CD8-positive, alpha-beta T cell (primary cell): ENCODE measurements at regions of chr6 and their contacts with region 1.

Region 1: GRCh38 chr6:32589598-32590449 is at the start of gene HLA-DRB1:
- DNase-seq: peak in 6 of 9 experiments; percentile 1 to 69 (median 25)
- ATAC-seq: peak; percentile 94
- H3K4me3 ChIP-seq: peak within 1 kb of the TSS; percentile 27 to 36
- H3K4me3 Mint-ChIP-seq: peak within 1 kb of the TSS; percentile 81
- H3K27ac ChIP-seq: peak within 1 kb of the TSS in 1 of 2 experiments; percentile 20
- H3K27ac Mint-ChIP-seq: peak within 1 kb of the TSS; percentile 80
- H3K4me1 ChIP-seq: no peaks in the 10 kb centered on the region
- H3K4me1 Mint-ChIP-seq: peaks cover 18% of the 10 kb centered on the region
- H3K27me3 ChIP-seq: no peaks in the 10 kb centered on the region
- H3K27me3 Mint-ChIP-seq: no peaks in the 10 kb centered on the region
- CTCF ChIP-seq: no peak
- total RNA-seq, gene HLA-DRB1: 32.6 to 33.4 TPM

Region 2: GRCh38 chr6:32522302-32523047 is 67.3 kb before region 1 on chr6:
- CTCF ChIA-PET with region 1: no interaction called
- POLR2A ChIA-PET with region 1: no interaction called
- intact Hi-C with region 1: loop called (anchors 1 to 2 kb)
- DNase-seq: no peak
- ATAC-seq: no peak
- H3K4me3 ChIP-seq: no peak overlapping the region
- H3K4me3 Mint-ChIP-seq: no peak overlapping the region
- H3K27ac ChIP-seq: no peak overlapping the region
- H3K27ac Mint-ChIP-seq: no peak overlapping the region
- H3K4me1 ChIP-seq: no peaks in the 10 kb centered on the region
- H3K4me1 Mint-ChIP-seq: peaks cover 7% of the 10 kb centered on the region
- H3K27me3 ChIP-seq: no peaks in the 10 kb centered on the region
- H3K27me3 Mint-ChIP-seq: no peaks in the 10 kb centered on the region
- CTCF ChIP-seq: no peak

Region 3: GRCh38 chr6:32529697-32530429 is 60.0 kb before region 1 on chr6 and contains the start of gene HLA-DRB5:
- CTCF ChIA-PET with region 1: no interaction called
- POLR2A ChIA-PET with region 1: no interaction called
- intact Hi-C with region 1: loop called in 1 of 2 experiments (anchors 2 kb)
- DNase-seq: peak in 3 of 9 experiments; percentile 4 to 61 (median 51)
- ATAC-seq: peak; percentile 66
- H3K4me3 ChIP-seq: peak within 1 kb of the TSS in 1 of 2 experiments; percentile 50
- H3K4me3 Mint-ChIP-seq: peak within 1 kb of the TSS; percentile 78
- H3K27ac ChIP-seq: peak within 1 kb of the TSS in 1 of 2 experiments; percentile 56
- H3K27ac Mint-ChIP-seq: peak within 1 kb of the TSS; percentile 32
- H3K4me1 ChIP-seq: no peaks in the 10 kb centered on the region
- H3K4me1 Mint-ChIP-seq: peaks cover 5% of the 10 kb centered on the region
- H3K27me3 ChIP-seq: no peaks in the 10 kb centered on the region
- H3K27me3 Mint-ChIP-seq: peaks cover 4% of the 10 kb centered on the region
- CTCF ChIP-seq: no peak
- total RNA-seq, gene HLA-DRB5: 9.3 to 10.1 TPM

Region 4: GRCh38 chr6:32558426-32559057 is 31.3 kb before region 1 on chr6:
- CTCF ChIA-PET with region 1: no interaction called
- POLR2A ChIA-PET with region 1: no interaction called
- intact Hi-C with region 1: loop called in 1 of 2 experiments (anchors 2 kb)
- DNase-seq: peak in 2 of 9 experiments; percentile 15 to 16
- ATAC-seq: no peak
- H3K4me3 ChIP-seq: no peak overlapping the region
- H3K4me3 Mint-ChIP-seq: no peak overlapping the region
- H3K27ac ChIP-seq: no peak overlapping the region
- H3K27ac Mint-ChIP-seq: no peak overlapping the region
- H3K4me1 ChIP-seq: no peaks in the 10 kb centered on the region
- H3K4me1 Mint-ChIP-seq: no peaks in the 10 kb centered on the region
- H3K27me3 ChIP-seq: no peaks in the 10 kb centered on the region
- H3K27me3 Mint-ChIP-seq: peaks cover 14% of the 10 kb centered on the region
- CTCF ChIP-seq: no peak

Region 5: DNA sequence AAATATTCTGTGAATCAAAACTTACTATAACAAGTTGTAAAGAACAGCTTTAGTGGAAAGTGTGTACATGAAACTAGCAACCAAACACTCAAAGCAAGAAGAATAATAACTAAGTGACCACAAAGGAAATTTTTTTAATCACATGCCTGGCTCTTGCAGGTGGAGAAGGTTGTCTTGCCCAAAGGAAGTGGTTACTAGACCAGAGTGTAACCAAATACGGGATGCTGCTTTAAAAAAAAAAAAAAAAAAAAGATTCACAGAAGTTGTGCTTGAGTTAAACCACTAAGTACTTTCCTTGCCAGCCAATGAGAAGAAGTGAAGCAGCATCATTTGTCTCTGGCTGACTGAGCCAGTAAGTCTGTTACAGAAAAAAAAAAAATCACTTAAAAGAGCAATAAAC is 95.8 kb after region 1 on chr6:
- CTCF ChIA-PET with region 1: no interaction called
- POLR2A ChIA-PET with region 1: interaction called, 3 read pairs
- intact Hi-C with region 1: loop called in 1 of 2 experiments (anchors 10 kb)
- DNase-seq: peak in 4 of 9 experiments; percentile 32 to 93 (median 62)
- ATAC-seq: peak; percentile 91
- H3K4me3 ChIP-seq: no peak overlapping the region
- H3K4me3 Mint-ChIP-seq: peak overlapping the region; percentile 1
- H3K27ac ChIP-seq: peak overlapping the region in 1 of 2 experiments; percentile 66
- H3K27ac Mint-ChIP-seq: peak overlapping the region; percentile 50
- H3K4me1 ChIP-seq: peaks cover 19% of the 10 kb centered on the region
- H3K4me1 Mint-ChIP-seq: peaks cover 24% of the 10 kb centered on the region
- H3K27me3 ChIP-seq: no peaks in the 10 kb centered on the region
- H3K27me3 Mint-ChIP-seq: no peaks in the 10 kb centered on the region
- CTCF ChIP-seq: no peak

Region 6: GRCh38 chr6:33264015-33264414 is 674.2 kb after region 1 on chr6:
- CTCF ChIA-PET with region 1: no interaction called
- POLR2A ChIA-PET with region 1: no interaction called
- intact Hi-C with region 1: no loop called
- DNase-seq: no peak
- ATAC-seq: no peak
- H3K4me3 ChIP-seq: no peak overlapping the region
- H3K4me3 Mint-ChIP-seq: no peak overlapping the region
- H3K27ac ChIP-seq: no peak overlapping the region
- H3K27ac Mint-ChIP-seq: no peak overlapping the region
- H3K4me1 ChIP-seq: no peaks in the 10 kb centered on the region
- H3K4me1 Mint-ChIP-seq: peaks cover 8% of the 10 kb centered on the region
- H3K27me3 ChIP-seq: no peaks in the 10 kb centered on the region
- H3K27me3 Mint-ChIP-seq: no peaks in the 10 kb centered on the region
- CTCF ChIP-seq: no peak